HepG2 (cell line): ENCODE measurements at regions of chr2 and their contacts with region 1.

Region 1: DNA sequence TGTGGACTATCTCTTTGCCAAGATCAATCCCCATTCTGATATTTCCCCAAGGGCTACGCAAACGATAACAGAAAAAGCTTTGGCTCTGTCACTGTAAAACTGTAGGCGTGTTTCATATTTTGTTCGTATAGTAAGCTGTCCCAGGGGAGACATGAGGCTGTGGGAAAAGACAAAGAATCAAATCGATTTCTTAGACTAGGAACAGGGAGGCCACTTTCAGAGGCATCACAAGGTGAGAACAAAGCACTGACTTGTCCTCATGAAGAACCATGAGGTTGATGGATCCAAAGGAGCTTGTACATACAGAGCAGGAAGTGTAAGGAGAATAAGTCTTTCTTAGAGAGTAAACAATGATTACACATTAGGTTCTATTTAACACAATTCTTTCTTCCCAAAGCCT is 255.7 kb downstream of the HNMT start:
- DNase-seq: peak; percentile 15
- ATAC-seq: peak; percentile 54
- H3K4me3 ChIP-seq: no peak overlapping the region
- H3K27ac ChIP-seq: no peak overlapping the region
- H3K4me1 ChIP-seq: peaks cover 28% of the 10 kb centered on the region
- H3K27me3 ChIP-seq: no peaks in the 10 kb centered on the region
- CTCF ChIP-seq: no peak
- EP300 ChIP-seq: no peak
- POLR2A ChIP-seq: no peak
- RAD21 ChIP-seq: no peak

Region 2: GRCh38 chr2:138190999-138191398 is 29.0 kb before region 1 on chr2:
- CTCF ChIA-PET with region 1: no interaction called
- POLR2A ChIA-PET with region 1: no interaction called
- in situ Hi-C with region 1: no loop called
- intact Hi-C with region 1: loop called (anchors 2 kb)
- DNase-seq: no peak
- ATAC-seq: no peak
- H3K4me3 ChIP-seq: no peak overlapping the region
- H3K27ac ChIP-seq: no peak overlapping the region
- H3K4me1 ChIP-seq: peaks cover 12% of the 10 kb centered on the region
- H3K27me3 ChIP-seq: no peaks in the 10 kb centered on the region
- CTCF ChIP-seq: no peak
- EP300 ChIP-seq: no peak
- POLR2A ChIP-seq: no peak
- RAD21 ChIP-seq: no peak

Region 3: DNA sequence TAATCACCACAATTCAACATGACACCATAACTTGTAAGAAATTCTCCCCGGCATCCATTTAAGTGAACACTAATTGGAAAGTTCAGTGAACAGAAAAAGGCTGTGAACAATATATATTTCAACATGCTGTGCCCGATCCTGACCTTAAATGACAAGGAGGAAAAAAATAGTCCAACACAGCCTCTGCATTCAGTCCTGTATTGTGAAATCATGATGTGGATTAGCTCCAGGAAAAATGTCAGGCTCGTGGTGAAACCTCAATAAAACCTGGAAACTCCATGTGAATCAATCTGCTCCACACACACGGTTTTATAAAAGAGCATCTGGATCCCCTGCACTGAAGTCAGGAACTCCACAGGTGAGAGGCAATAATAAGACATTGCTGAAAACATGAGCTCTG is 136.2 kb after region 1 on chr2:
- CTCF ChIA-PET with region 1: no interaction called
- POLR2A ChIA-PET with region 1: no interaction called
- in situ Hi-C with region 1: no loop called
- intact Hi-C with region 1: no loop called
- DNase-seq: peak; percentile 70
- ATAC-seq: peak; percentile 69
- H3K4me3 ChIP-seq: no peak overlapping the region
- H3K27ac ChIP-seq: no peak overlapping the region
- H3K4me1 ChIP-seq: peaks cover 10% of the 10 kb centered on the region
- H3K27me3 ChIP-seq: no peaks in the 10 kb centered on the region
- CTCF ChIP-seq: no peak
- EP300 ChIP-seq: peak in 1 of 2 experiments; percentile 5; a peak in 1 of 4 replicates
- POLR2A ChIP-seq: no peak
- RAD21 ChIP-seq: no peak